Activated CD8-positive, alpha-beta T cell treated with anti-CD3 and anti-CD28 coated beads for 36 hours (primary cell): ENCODE measurements at regions of chr7 and their contacts with region 1.

Region 1: GRCh38 chr7:131027287-131027773 is 293.3 kb upstream of the KLF14 start:
- DNase-seq: peak; percentile 65
- ATAC-seq: peak; percentile 15
- H3K4me3 Mint-ChIP-seq: no peak overlapping the region
- H3K27ac Mint-ChIP-seq: peak overlapping the region; percentile 99
- H3K4me1 Mint-ChIP-seq: peaks cover 82% of the 10 kb centered on the region
- H3K27me3 Mint-ChIP-seq: no peaks in the 10 kb centered on the region
- CTCF ChIP-seq: no peak

Region 2: GRCh38 chr7:130966246-130967009 is 60.9 kb before region 1 on chr7:
- CTCF ChIA-PET with region 1: interaction called, 3 read pairs
- POLR2A ChIA-PET with region 1: interaction called, 50 read pairs
- intact Hi-C with region 1: loop called (anchors 2 kb)
- DNase-seq: peak; percentile 53
- ATAC-seq: peak; percentile 18
- H3K4me3 Mint-ChIP-seq: peak overlapping the region; percentile 26
- H3K27ac Mint-ChIP-seq: peak overlapping the region; percentile 83
- H3K4me1 Mint-ChIP-seq: peaks cover 69% of the 10 kb centered on the region
- H3K27me3 Mint-ChIP-seq: no peaks in the 10 kb centered on the region
- CTCF ChIP-seq: no peak

Region 3: GRCh38 chr7:130996841-130997231 is 30.5 kb before region 1 on chr7:
- CTCF ChIA-PET with region 1: no interaction called
- POLR2A ChIA-PET with region 1: interaction called, 3 read pairs
- intact Hi-C with region 1: loop called (anchors 5 kb)
- DNase-seq: peak; percentile 69
- ATAC-seq: peak; percentile 82
- H3K4me3 Mint-ChIP-seq: peak overlapping the region; percentile 20
- H3K27ac Mint-ChIP-seq: peak overlapping the region; percentile 85
- H3K4me1 Mint-ChIP-seq: peaks cover 76% of the 10 kb centered on the region
- H3K27me3 Mint-ChIP-seq: no peaks in the 10 kb centered on the region
- CTCF ChIP-seq: no peak